ENCODE measurements at regions of chr10 and their contacts with region 1.

Region 1: GRCh38 chr10:62183442-62183841 is 85.2 kb downstream of the RTKN2 start:
- DNase-seq: peak in 8 of 9 donors; percentile 45 to 95 (median 90)
- ATAC-seq: peak; percentile 96
- H3K4me3 ChIP-seq: no peak overlapping the region
- H3K4me3 Mint-ChIP-seq: peak overlapping the region; percentile 10 to 77 (median 62)
- H3K27ac ChIP-seq: peak overlapping the region; percentile 74
- H3K27ac Mint-ChIP-seq: peak overlapping the region; percentile 84 to 98 (median 93)
- H3K4me1 ChIP-seq: peaks cover 36 to 67% of the 10 kb centered on the region in 2 donors
- H3K4me1 Mint-ChIP-seq: peaks cover 28 to 99% (median 87%) of the 10 kb centered on the region in 7 donors
- H3K27me3 ChIP-seq: no peaks in the 10 kb centered on the region
- H3K27me3 Mint-ChIP-seq: no peaks in the 10 kb centered on the region

Region 2: DNA sequence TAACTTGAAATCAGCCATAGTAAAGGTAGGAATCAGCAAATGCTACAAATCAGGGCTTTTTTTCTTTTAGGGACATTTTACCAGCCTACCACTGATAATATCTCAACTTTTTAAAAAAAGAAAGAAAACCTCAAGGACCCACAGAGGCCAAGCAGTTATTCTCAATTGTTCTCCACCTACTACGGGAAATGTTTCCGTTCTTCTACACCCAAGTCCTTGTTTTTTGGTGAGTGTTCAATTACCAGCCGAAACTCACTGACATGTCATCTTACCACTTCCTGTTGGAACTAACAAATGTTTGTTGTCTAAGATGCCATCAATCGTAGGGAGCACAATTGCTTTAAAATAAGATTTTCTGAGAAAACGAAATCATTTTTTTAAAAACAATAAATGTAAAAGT is 1455.4 kb before region 1 on chr10:
- CTCF ChIA-PET with region 1: no interaction called
- POLR2A ChIA-PET with region 1: no interaction called
- intact Hi-C with region 1: loop called in 1 of 2 experiments (anchors 2 kb)
- DNase-seq: peak in 7 of 9 donors; percentile 51 to 85 (median 78)
- ATAC-seq: peak; percentile 73
- H3K4me3 ChIP-seq: peak overlapping the region; percentile 57
- H3K4me3 Mint-ChIP-seq: peak overlapping the region; percentile 74 to 94 (median 83)
- H3K27ac ChIP-seq: peak overlapping the region; percentile 89
- H3K27ac Mint-ChIP-seq: peak overlapping the region; percentile 84 to 98 (median 94)
- H3K4me1 ChIP-seq: peaks cover 28 to 64% of the 10 kb centered on the region in 2 donors
- H3K4me1 Mint-ChIP-seq: peaks cover 35 to 86% (median 77%) of the 10 kb centered on the region in 7 donors
- H3K27me3 ChIP-seq: no peaks in the 10 kb centered on the region
- H3K27me3 Mint-ChIP-seq: peaks cover 0 to 7% (median 0%) of the 10 kb centered on the region in 5 donors

Region 3: DNA sequence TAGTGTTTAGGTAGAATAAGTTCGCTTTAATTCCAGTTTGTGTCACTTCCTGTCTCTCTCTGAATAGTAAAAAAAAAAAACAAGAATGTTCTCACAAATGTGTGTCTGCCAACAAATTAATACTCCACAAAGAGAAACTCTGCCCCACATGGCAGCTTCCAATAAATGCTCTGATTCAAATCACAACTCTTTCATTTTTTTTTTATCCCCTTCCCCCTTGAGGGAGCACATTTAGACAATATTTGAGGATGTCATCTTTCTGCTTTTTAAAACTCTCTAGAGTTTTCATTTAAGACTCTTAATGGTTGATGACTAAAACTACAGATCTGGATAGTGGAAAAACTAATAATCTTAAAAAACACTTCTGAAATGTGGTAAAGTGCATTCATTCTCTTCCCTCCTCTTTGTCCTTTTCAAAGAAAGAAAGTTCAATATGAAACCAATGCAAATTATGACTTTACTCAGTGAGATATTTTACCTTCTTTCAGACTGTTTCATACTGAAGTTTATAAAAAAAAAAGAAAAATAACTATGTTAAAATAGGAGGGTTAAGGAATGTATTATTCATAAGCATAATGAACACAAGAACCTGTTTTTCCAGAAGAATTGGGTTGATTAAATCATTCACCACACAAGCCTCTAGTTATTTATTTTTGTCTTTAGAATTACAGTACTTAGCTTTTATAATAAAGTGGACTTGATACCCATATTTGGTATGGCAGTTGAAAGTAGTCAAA is 239.6 kb before region 1 on chr10:
- CTCF ChIA-PET with region 1: no interaction called
- POLR2A ChIA-PET with region 1: no interaction called
- intact Hi-C with region 1: loop called in 1 of 2 experiments (anchors 2 kb)
- DNase-seq: peak in 7 of 9 donors; percentile 25 to 58 (median 36)
- ATAC-seq: peak; percentile 65
- H3K4me3 ChIP-seq: peak overlapping the region; percentile 15
- H3K4me3 Mint-ChIP-seq: peak overlapping the region; percentile 60 to 86 (median 69)
- H3K27ac ChIP-seq: peak overlapping the region; percentile 58
- H3K27ac Mint-ChIP-seq: peak overlapping the region; percentile 47 to 94 (median 88)
- H3K4me1 ChIP-seq: peaks cover 28 to 46% of the 10 kb centered on the region in 2 donors
- H3K4me1 Mint-ChIP-seq: peaks cover 29 to 55% (median 51%) of the 10 kb centered on the region in 7 donors
- H3K27me3 ChIP-seq: no peaks in the 10 kb centered on the region
- H3K27me3 Mint-ChIP-seq: no peaks in the 10 kb centered on the region

Region 4: DNA sequence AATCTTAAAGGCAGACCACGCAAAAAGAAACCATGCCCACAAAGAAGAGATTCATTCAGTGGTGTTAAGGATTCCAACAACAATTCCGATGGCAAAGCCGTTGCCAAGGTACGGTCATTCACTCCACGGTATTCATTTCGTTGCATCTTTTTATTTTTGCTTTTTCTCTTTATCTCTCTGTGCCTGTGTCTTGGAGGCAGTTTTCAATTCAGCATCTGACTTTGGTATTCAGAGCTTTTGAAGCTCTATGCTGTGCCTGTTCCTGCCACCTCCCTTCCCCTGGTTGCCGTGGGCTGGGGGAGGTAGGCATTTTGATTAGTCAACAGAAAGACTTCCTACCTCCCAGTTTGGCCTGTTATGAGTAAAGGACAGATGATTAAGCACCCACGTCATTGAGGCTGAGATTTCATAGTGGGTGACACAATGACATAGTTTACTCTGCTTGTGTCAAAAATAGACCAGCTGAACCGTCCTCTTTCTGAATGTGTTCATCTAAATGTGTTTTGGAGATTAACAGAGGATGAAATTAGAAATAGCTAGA is 132.5 kb before region 1 on chr10:
- CTCF ChIA-PET with region 1: interaction called, 5 read pairs
- POLR2A ChIA-PET with region 1: interaction called, 12 read pairs
- intact Hi-C with region 1: loop called (anchors 1 to 2 kb)
- DNase-seq: peak; percentile 25 to 88 (median 78)
- ATAC-seq: peak; percentile 86
- H3K4me3 ChIP-seq: peak overlapping the region; percentile 62
- H3K4me3 Mint-ChIP-seq: peak overlapping the region; percentile 81 to 94 (median 88)
- H3K27ac ChIP-seq: peak overlapping the region; percentile 77
- H3K27ac Mint-ChIP-seq: peak overlapping the region; percentile 91 to 100 (median 96)
- H3K4me1 ChIP-seq: peaks cover 59 to 63% of the 10 kb centered on the region in 2 donors
- H3K4me1 Mint-ChIP-seq: peaks cover 60 to 99% (median 96%) of the 10 kb centered on the region in 7 donors
- H3K27me3 ChIP-seq: no peaks in the 10 kb centered on the region
- H3K27me3 Mint-ChIP-seq: no peaks in the 10 kb centered on the region

Region 5: DNA sequence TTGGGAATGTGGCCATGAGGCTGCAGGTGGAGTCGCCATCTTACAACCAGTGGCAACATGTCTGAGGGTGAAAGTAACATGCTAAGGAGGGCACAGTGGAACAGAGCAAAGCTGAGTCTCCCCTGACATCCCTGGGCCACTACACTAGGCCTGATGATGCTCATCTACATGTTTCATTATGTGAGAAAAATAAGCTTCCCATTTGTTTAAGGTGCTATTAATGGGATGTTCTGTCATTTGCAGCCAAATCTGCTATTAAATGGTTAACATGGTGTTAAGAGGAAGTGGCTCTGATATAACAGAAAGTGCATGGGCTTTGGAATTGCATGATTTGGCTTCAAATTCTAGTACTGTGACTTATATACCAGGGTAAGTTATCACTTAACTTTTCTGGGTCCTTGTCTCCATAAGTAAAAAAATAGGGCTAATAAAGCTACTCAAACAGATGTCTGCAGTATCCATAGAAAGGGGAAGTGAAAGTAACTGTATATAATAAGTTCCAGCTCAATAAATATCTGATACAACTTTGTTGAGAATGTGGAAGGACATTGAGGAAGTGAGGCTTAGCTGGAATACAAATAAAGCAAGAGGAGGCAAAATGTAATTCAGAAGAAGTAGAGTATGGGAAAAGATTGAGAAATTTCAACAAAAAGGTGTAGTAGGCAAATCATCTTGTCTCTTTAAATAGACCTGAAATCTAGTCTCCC is 73.7 kb before region 1 on chr10:
- CTCF ChIA-PET with region 1: no interaction called
- POLR2A ChIA-PET with region 1: no interaction called
- intact Hi-C with region 1: loop called (anchors 2 to 5 kb)
- DNase-seq: no peak
- ATAC-seq: peak; percentile 66
- H3K4me3 ChIP-seq: peak overlapping the region; percentile 9
- H3K4me3 Mint-ChIP-seq: peak overlapping the region in 8 of 10 donors; percentile 21 to 69 (median 58)
- H3K27ac ChIP-seq: no peak overlapping the region
- H3K27ac Mint-ChIP-seq: peak overlapping the region in 8 of 9 donors; percentile 20 to 88 (median 52)
- H3K4me1 ChIP-seq: peaks cover 7 to 26% of the 10 kb centered on the region in 2 donors
- H3K4me1 Mint-ChIP-seq: peaks cover 34 to 54% (median 43%) of the 10 kb centered on the region in 7 donors
- H3K27me3 ChIP-seq: no peaks in the 10 kb centered on the region
- H3K27me3 Mint-ChIP-seq: no peaks in the 10 kb centered on the region

Region 6: DNA sequence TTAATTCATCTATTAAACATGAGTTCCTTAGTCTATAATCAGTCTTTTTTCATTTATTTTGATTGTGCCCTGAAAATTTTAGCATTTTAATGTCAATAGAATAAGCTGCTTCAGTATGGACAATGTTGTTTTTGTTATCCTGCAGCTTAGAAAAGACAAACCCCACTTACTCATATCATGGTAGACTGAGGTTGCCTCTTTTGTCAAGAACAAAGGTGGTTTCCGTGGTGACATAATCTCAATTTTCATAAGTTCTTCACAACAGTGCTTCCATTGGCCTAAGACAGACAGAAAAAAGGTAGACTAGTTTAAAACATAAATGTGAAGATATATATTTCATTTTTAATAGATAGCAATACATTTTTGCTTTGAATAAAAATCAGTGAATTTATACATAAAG is 16.1 kb after region 1 on chr10:
- CTCF ChIA-PET with region 1: interaction called, 3 read pairs
- POLR2A ChIA-PET with region 1: interaction called, 5 read pairs
- intact Hi-C with region 1: loop called (anchors 1 kb)
- DNase-seq: peak in 4 of 9 donors; percentile 22 to 40 (median 28)
- ATAC-seq: peak; percentile 55
- H3K4me3 ChIP-seq: no peak overlapping the region
- H3K4me3 Mint-ChIP-seq: peak overlapping the region in 1 of 10 donors; percentile 56
- H3K27ac ChIP-seq: no peak overlapping the region
- H3K27ac Mint-ChIP-seq: peak overlapping the region in 3 of 9 donors; percentile 32 to 64 (median 51)
- H3K4me1 ChIP-seq: peaks cover 0 to 13% of the 10 kb centered on the region in 2 donors
- H3K4me1 Mint-ChIP-seq: peaks cover 7 to 37% (median 28%) of the 10 kb centered on the region in 7 donors
- H3K27me3 ChIP-seq: no peaks in the 10 kb centered on the region
- H3K27me3 Mint-ChIP-seq: no peaks in the 10 kb centered on the region

Region 7: DNA sequence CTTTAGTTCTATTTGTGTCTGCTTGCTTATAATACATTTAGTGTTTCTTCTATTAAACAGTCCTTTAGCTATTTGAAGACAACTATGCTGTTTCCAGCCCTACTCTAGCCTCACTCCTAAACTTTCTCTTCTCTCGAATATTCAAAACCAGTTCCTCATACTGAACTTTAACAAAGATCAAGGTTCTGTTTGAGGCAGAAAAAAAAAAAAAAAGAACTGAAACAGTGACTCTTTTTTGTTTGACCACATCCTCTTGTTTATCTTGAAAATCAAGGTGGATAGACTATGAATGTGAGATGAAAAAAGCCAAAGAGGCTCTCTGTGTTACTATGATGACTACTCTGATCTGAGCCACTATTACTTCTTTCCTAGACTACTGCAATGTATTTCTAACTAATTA is 345.0 kb after region 1 on chr10:
- CTCF ChIA-PET with region 1: no interaction called
- POLR2A ChIA-PET with region 1: no interaction called
- intact Hi-C with region 1: loop called in 1 of 2 experiments (anchors 1 kb)
- DNase-seq: peak in 7 of 9 donors; percentile 42 to 83 (median 78)
- ATAC-seq: peak; percentile 95
- H3K4me3 ChIP-seq: no peak overlapping the region
- H3K4me3 Mint-ChIP-seq: peak overlapping the region; percentile 0 to 78 (median 70)
- H3K27ac ChIP-seq: peak overlapping the region; percentile 44
- H3K27ac Mint-ChIP-seq: peak overlapping the region; percentile 47 to 86 (median 75)
- H3K4me1 ChIP-seq: peaks cover 24 to 39% of the 10 kb centered on the region in 2 donors
- H3K4me1 Mint-ChIP-seq: peaks cover 32 to 49% (median 43%) of the 10 kb centered on the region in 7 donors
- H3K27me3 ChIP-seq: no peaks in the 10 kb centered on the region
- H3K27me3 Mint-ChIP-seq: peaks cover 0 to 15% (median 0%) of the 10 kb centered on the region in 5 donors

Measured in naive thymus-derived CD4-positive, alpha-beta T cell (primary cell).